K562 (cell line): ENCODE measurements at regions of chr12 and their contacts with region 1.

Region 1: GRCh38 chr12:70576346-70577282 is 60.6 kb downstream of the PTPRB start:
- DNase-seq: peak; percentile 39 to 72 (median 44)
- ATAC-seq: peak; percentile 89
- H3K4me3 ChIP-seq: no peak overlapping the region
- H3K27ac ChIP-seq: no peak overlapping the region
- H3K4me1 ChIP-seq: no peaks in the 10 kb centered on the region
- H3K27me3 ChIP-seq: no peaks in the 10 kb centered on the region
- CTCF ChIP-seq: peak; percentile 73 to 86 (median 75)
- EP300 ChIP-seq: no peak
- POLR2A ChIP-seq: no peak
- RAD21 ChIP-seq: peak; percentile 89 to 94

Region 2: DNA sequence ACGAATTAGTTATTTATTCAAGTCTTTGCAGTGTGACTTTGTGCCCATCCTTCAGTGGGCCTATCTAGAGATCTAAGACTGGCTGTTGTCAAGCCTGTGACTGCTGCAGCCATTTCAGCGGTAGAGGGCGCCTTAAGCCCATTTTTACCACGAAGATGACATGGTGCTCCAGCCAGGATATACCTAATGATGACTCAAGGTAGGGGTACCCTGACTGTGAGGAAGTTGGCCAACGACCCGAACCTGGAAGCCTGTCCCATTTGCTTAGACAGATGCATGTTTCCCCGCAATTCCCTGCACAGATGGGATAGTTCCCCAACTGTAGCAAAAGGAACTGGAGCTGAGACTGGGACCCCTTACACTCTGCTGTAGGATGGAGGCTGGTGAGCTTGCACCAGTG is 796.7 kb before region 1 on chr12:
- CTCF ChIA-PET with region 1: no interaction called
- POLR2A ChIA-PET with region 1: no interaction called
- in situ Hi-C with region 1: no loop called
- intact Hi-C with region 1: loop called (anchors 10 kb)
- DNase-seq: peak; percentile 35 to 71 (median 52)
- ATAC-seq: peak; percentile 98
- H3K4me3 ChIP-seq: no peak overlapping the region
- H3K27ac ChIP-seq: no peak overlapping the region
- H3K4me1 ChIP-seq: no peaks in the 10 kb centered on the region
- H3K27me3 ChIP-seq: no peaks in the 10 kb centered on the region
- CTCF ChIP-seq: peak; percentile 59 to 77 (median 72)
- EP300 ChIP-seq: no peak
- POLR2A ChIP-seq: no peak
- RAD21 ChIP-seq: peak; percentile 30 to 74; a peak in 3 of 4 replicates

Region 3: DNA sequence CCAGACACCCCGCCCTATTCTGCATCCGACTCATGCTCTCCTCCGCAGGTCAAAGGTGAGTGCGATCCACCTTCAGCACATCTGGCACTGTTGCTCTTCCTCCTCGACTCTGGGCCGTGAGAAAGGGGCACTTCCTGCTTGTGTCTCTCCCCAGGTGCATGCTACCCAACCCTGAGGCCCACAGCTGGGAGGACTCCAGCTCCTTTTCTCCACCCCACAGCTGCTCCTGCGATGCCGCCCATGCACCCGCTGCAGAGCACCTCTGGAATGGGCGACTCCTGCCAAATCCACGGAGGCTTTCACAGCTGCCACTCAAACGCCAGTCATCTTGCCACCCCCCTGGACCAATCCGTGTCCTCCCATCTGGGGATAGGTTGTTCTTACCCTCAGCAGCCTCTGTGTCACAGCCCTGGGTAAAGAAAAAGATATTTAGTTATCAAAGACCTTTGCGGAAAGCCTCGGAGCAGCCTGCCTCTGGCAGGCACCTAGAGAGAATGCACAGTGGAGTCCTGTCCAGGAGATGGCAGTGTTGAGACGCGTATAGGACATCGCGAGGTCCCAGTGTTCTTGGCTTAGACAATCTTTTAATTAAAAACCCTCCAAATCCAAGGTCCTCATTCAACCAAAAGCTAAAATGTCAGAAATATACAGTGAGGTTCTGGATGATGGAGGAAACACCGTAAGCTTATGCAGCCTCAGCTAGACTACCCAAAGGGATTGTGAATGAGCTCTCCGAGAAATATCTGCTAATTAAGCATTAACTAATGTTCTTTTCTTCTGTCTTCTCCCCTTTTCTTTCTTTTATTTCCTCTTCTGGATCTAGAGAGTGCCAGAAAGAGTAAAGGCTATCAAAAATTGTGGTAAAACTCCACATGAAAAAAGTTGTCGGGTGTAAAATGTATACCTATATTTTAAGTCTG is 697.3 kb before region 1 on chr12:
- CTCF ChIA-PET with region 1: interaction called, 21 read pairs
- POLR2A ChIA-PET with region 1: no interaction called
- in situ Hi-C with region 1: no loop called
- intact Hi-C with region 1: loop called (anchors 1 kb)
- DNase-seq: peak; percentile 74 to 80 (median 77)
- ATAC-seq: peak; percentile 99
- H3K4me3 ChIP-seq: no peak overlapping the region
- H3K27ac ChIP-seq: no peak overlapping the region
- H3K4me1 ChIP-seq: peaks cover 0 to 7% of the 10 kb centered on the region in 2 experiments; a peak in 2 of 5 replicates
- H3K27me3 ChIP-seq: peaks cover 5 to 12% of the 10 kb centered on the region in 2 experiments; a peak in 4 of 5 replicates
- CTCF ChIP-seq: peak; percentile 80 to 92 (median 92)
- EP300 ChIP-seq: no peak
- POLR2A ChIP-seq: no peak
- RAD21 ChIP-seq: peak; percentile 86 to 94

Region 4: DNA sequence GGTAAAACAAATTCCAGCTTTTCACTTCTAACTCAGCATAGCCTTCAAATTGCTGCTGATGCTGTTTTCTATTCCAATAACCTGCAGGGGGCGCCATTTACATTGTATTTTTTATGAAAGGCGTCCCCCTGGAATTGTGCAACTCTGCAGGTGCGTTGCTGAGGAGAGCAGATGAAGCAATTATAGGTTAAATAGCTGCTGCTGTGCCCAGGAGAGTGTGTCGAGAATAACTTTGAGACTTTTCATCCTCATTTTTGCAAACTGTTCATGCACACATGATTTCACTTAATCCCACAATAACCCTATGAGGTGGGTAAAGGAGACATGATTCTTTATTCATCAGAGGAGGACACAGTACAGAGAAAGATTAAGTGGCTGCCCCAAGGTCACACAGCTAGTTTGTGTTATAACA is 675.9 kb before region 1 on chr12:
- CTCF ChIA-PET with region 1: interaction called, 7 read pairs
- POLR2A ChIA-PET with region 1: no interaction called
- in situ Hi-C with region 1: loop called (anchors 5 kb)
- intact Hi-C with region 1: loop called (anchors 1 kb)
- DNase-seq: peak; percentile 35 to 81 (median 37)
- ATAC-seq: peak; percentile 83
- H3K4me3 ChIP-seq: no peak overlapping the region
- H3K27ac ChIP-seq: no peak overlapping the region
- H3K4me1 ChIP-seq: no peaks in the 10 kb centered on the region
- H3K27me3 ChIP-seq: peaks cover 0 to 4% of the 10 kb centered on the region in 2 experiments; a peak in 1 of 5 replicates
- CTCF ChIP-seq: peak; percentile 55 to 79 (median 68)
- EP300 ChIP-seq: no peak
- POLR2A ChIP-seq: no peak
- RAD21 ChIP-seq: peak; percentile 88 to 91

Region 5: GRCh38 chr12:69978020-69978419 is 598.6 kb before region 1 on chr12:
- CTCF ChIA-PET with region 1: no interaction called
- POLR2A ChIA-PET with region 1: no interaction called
- in situ Hi-C with region 1: no loop called
- intact Hi-C with region 1: loop called (anchors 10 kb)
- DNase-seq: no peak
- ATAC-seq: no peak
- H3K4me3 ChIP-seq: no peak overlapping the region
- H3K27ac ChIP-seq: no peak overlapping the region
- H3K4me1 ChIP-seq: no peaks in the 10 kb centered on the region; a peak in 1 of 5 replicates
- H3K27me3 ChIP-seq: peaks cover 0 to 3% of the 10 kb centered on the region in 2 experiments; a peak in 1 of 5 replicates
- CTCF ChIP-seq: no peak
- EP300 ChIP-seq: no peak
- POLR2A ChIP-seq: no peak
- RAD21 ChIP-seq: no peak

Region 6: GRCh38 chr12:70110085-70110484 is 466.5 kb before region 1 on chr12:
- CTCF ChIA-PET with region 1: no interaction called
- POLR2A ChIA-PET with region 1: no interaction called
- in situ Hi-C with region 1: no loop called
- intact Hi-C with region 1: loop called (anchors 10 kb)
- DNase-seq: no peak
- ATAC-seq: no peak
- H3K4me3 ChIP-seq: no peak overlapping the region
- H3K27ac ChIP-seq: no peak overlapping the region
- H3K4me1 ChIP-seq: no peaks in the 10 kb centered on the region
- H3K27me3 ChIP-seq: no peaks in the 10 kb centered on the region
- CTCF ChIP-seq: no peak
- EP300 ChIP-seq: no peak
- POLR2A ChIP-seq: no peak
- RAD21 ChIP-seq: no peak

Region 7: GRCh38 chr12:70214972-70215617 is 361.5 kb before region 1 on chr12:
- CTCF ChIA-PET with region 1: no interaction called
- POLR2A ChIA-PET with region 1: no interaction called
- in situ Hi-C with region 1: no loop called
- intact Hi-C with region 1: loop called (anchors 10 kb)
- DNase-seq: no peak
- ATAC-seq: no peak
- H3K4me3 ChIP-seq: no peak overlapping the region
- H3K27ac ChIP-seq: no peak overlapping the region
- H3K4me1 ChIP-seq: no peaks in the 10 kb centered on the region
- H3K27me3 ChIP-seq: no peaks in the 10 kb centered on the region
- CTCF ChIP-seq: no peak
- EP300 ChIP-seq: no peak
- POLR2A ChIP-seq: no peak
- RAD21 ChIP-seq: no peak

Region 8: GRCh38 chr12:70317781-70318180 is 258.8 kb before region 1 on chr12:
- CTCF ChIA-PET with region 1: no interaction called
- POLR2A ChIA-PET with region 1: no interaction called
- in situ Hi-C with region 1: no loop called
- intact Hi-C with region 1: no loop called
- DNase-seq: no peak
- ATAC-seq: no peak
- H3K4me3 ChIP-seq: no peak overlapping the region
- H3K27ac ChIP-seq: no peak overlapping the region
- H3K4me1 ChIP-seq: no peaks in the 10 kb centered on the region
- H3K27me3 ChIP-seq: no peaks in the 10 kb centered on the region
- CTCF ChIP-seq: no peak
- EP300 ChIP-seq: no peak
- POLR2A ChIP-seq: no peak
- RAD21 ChIP-seq: no peak

Region 9: DNA sequence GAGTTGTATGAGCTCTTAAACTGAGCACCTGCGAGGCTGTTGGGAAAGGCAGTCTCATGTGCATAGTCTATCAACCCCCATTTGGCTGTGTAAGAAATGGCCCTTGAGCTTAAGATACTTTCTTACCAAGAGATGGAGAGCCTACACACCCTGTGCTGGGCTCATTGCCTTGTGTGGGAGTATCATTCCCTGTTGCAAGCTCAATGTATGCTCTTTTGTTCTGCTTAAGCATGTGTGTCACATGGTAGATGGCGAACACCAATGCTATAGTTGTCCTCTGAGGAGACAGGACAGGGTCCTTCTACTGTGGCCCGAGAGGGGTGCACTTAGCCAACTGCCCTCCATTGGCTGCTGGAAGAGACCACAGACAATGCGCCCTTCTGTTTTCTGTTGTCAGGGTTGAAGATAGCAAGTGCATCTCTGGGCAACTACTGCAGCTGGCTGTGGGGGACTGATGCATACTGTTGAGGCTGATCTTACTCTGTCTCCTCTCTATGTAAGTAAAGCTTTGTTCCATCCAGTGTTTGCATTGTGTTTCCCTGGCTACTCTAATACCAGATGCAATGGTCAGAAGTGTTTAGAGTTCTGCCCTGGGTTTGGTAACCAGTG is 18.9 kb before region 1 on chr12:
- CTCF ChIA-PET with region 1: no interaction called
- POLR2A ChIA-PET with region 1: no interaction called
- in situ Hi-C with region 1: no loop called
- intact Hi-C with region 1: no loop called
- DNase-seq: no peak
- ATAC-seq: no peak
- H3K4me3 ChIP-seq: no peak overlapping the region
- H3K27ac ChIP-seq: no peak overlapping the region
- H3K4me1 ChIP-seq: peaks cover 0 to 2% of the 10 kb centered on the region in 2 experiments; a peak in 1 of 5 replicates
- H3K27me3 ChIP-seq: no peaks in the 10 kb centered on the region
- CTCF ChIP-seq: no peak
- EP300 ChIP-seq: no peak
- POLR2A ChIP-seq: no peak
- RAD21 ChIP-seq: no peak

Region 10: DNA sequence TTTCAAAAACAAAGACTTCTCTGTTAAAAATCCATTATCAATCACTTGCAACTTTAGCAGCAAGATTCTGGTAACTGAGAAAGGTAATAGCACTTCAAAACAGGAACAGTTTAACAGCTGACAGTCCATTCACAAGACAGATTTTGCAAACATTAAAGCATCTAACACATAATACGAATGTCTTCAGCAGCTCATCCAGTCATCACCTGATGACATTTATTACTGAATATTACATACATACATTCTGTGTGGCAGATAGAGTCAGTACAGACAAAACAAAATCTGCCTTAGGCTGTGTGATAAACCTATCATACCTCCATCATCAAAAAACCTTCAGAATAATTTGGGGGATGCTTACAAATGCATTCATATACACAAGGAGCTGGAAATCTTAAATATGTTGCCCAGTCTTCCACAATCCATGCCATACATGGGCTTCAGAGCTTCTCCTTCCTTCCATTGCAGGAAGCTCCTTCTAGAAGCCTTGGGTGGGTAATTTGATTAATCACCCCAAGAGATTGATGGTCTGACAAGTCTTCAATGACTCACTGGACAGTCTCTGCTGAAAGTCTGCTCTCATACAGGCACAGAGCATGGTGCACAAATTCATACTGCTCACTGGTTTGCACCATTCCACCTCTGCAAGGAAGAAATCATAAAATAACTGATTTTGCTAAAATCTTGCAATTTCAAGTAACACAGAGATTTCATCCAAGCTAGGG is 62.2 kb after region 1 on chr12:
- CTCF ChIA-PET with region 1: no interaction called
- POLR2A ChIA-PET with region 1: no interaction called
- in situ Hi-C with region 1: no loop called
- intact Hi-C with region 1: no loop called
- DNase-seq: peak in 1 of 4 experiments; percentile 11
- ATAC-seq: peak; percentile 33; the same call in 1 of the 3 replicates
- H3K4me3 ChIP-seq: no peak overlapping the region
- H3K27ac ChIP-seq: no peak overlapping the region
- H3K4me1 ChIP-seq: peaks cover 0 to 8% of the 10 kb centered on the region in 2 experiments; a peak in 1 of 5 replicates
- H3K27me3 ChIP-seq: no peaks in the 10 kb centered on the region
- CTCF ChIP-seq: no peak
- EP300 ChIP-seq: no peak
- POLR2A ChIP-seq: no peak
- RAD21 ChIP-seq: no peak